ENCODE measurements at regions of chr7 and their contacts with region 1.

Region 1: GRCh38 chr7:129218514-129219062 is 6.2 kb upstream of the AHCYL2 start:
- DNase-seq: peak; percentile 84
- H3K4me3 Mint-ChIP-seq: no peak overlapping the region
- H3K27ac Mint-ChIP-seq: no peak overlapping the region
- H3K4me1 Mint-ChIP-seq: peaks cover 17% of the 10 kb centered on the region
- H3K27me3 Mint-ChIP-seq: no peaks in the 10 kb centered on the region

Region 2: DNA sequence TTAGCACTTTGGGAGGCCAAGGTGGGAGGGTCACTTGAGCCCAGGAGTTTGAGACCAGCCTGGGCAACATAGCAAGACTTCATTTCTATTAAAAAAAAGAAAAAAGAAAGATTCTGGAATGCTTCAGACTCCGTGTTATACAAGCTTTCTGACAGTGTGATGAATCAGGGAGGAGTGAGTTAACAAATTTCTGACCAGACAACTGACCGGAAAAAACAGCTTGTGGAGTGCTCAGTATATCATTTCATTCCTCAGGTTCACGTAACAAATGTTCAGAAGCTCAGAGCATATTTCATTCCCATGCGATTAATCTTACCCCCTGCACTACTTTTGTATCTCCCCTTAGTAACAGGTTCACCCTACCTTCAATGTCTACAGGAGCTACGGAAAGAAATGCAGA is 135.1 kb before region 1 on chr7:
- CTCF ChIA-PET with region 1: no interaction called
- POLR2A ChIA-PET with region 1: no interaction called
- DNase-seq: no peak
- H3K4me3 Mint-ChIP-seq: no peak overlapping the region
- H3K27ac Mint-ChIP-seq: no peak overlapping the region
- H3K4me1 Mint-ChIP-seq: no peaks in the 10 kb centered on the region
- H3K27me3 Mint-ChIP-seq: peaks cover 4% of the 10 kb centered on the region

Region 3: GRCh38 chr7:129205987-129206785 is 12.4 kb before region 1 on chr7:
- CTCF ChIA-PET with region 1: interaction called, 10 read pairs
- POLR2A ChIA-PET with region 1: no interaction called
- DNase-seq: no peak
- H3K4me3 Mint-ChIP-seq: no peak overlapping the region
- H3K27ac Mint-ChIP-seq: no peak overlapping the region
- H3K4me1 Mint-ChIP-seq: no peaks in the 10 kb centered on the region
- H3K27me3 Mint-ChIP-seq: no peaks in the 10 kb centered on the region

Region 4: GRCh38 chr7:129271500-129272355 is 53.1 kb after region 1 on chr7:
- CTCF ChIA-PET with region 1: interaction called, 45 read pairs
- POLR2A ChIA-PET with region 1: no interaction called
- DNase-seq: peak; percentile 81
- H3K4me3 Mint-ChIP-seq: no peak overlapping the region
- H3K27ac Mint-ChIP-seq: no peak overlapping the region
- H3K4me1 Mint-ChIP-seq: peaks cover 5% of the 10 kb centered on the region
- H3K27me3 Mint-ChIP-seq: no peaks in the 10 kb centered on the region

Region 5: GRCh38 chr7:129362496-129362895 is 143.9 kb after region 1 on chr7:
- CTCF ChIA-PET with region 1: no interaction called
- POLR2A ChIA-PET with region 1: no interaction called
- DNase-seq: no peak
- H3K4me3 Mint-ChIP-seq: no peak overlapping the region
- H3K27ac Mint-ChIP-seq: no peak overlapping the region
- H3K4me1 Mint-ChIP-seq: peaks cover 13% of the 10 kb centered on the region
- H3K27me3 Mint-ChIP-seq: no peaks in the 10 kb centered on the region

Region 6: GRCh38 chr7:129394982-129395914 is 176.7 kb after region 1 on chr7:
- CTCF ChIA-PET with region 1: no interaction called
- POLR2A ChIA-PET with region 1: no interaction called
- DNase-seq: no peak
- H3K4me3 Mint-ChIP-seq: no peak overlapping the region
- H3K27ac Mint-ChIP-seq: no peak overlapping the region
- H3K4me1 Mint-ChIP-seq: no peaks in the 10 kb centered on the region
- H3K27me3 Mint-ChIP-seq: no peaks in the 10 kb centered on the region